H1 (cell line): ENCODE measurements at regions of chr10 and their contacts with region 1.

Region 1: DNA sequence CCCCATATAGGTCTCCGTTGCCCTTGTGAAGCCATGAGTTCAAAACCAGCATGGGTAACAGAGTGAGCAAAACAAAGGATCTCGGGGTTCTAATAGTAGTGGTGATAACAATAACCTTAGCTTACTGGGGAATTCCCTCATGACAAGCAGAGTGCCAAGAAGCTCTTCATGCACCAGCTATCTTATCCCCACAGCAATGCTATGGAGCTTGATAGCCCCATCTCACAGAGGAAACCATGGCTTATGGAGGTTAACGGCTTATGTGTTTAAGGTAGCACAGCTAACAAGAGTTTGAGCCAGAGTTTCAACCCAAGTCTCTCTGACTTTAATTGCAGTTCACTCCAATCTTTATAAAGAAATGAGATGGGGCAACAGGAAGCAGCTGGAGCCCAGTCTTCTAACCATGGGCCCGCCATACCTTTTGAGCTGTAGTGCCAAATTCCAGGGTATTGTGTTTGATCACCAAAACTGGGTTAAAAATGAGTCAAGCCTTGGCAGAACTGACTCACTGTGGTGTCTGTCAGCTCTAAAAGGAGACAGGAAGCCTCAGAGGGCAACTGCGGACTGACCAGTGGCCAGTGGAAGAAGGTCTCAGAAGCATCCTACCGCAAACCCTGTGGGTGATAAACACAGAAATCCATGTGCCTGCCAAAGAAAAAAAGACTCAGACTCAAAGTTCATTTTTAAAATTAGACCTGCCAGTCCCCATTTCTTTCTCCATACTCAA is 16.5 kb upstream of the PLAU start:
- DNase-seq: no peak
- H3K4me3 ChIP-seq: no peak overlapping the region
- H3K27ac ChIP-seq: no peak overlapping the region
- H3K4me1 ChIP-seq: no peaks in the 10 kb centered on the region
- H3K27me3 ChIP-seq: no peaks in the 10 kb centered on the region
- CTCF ChIP-seq: no peak
- EP300 ChIP-seq: no peak
- POLR2A ChIP-seq: no peak
- RAD21 ChIP-seq: no peak

Region 2: GRCh38 chr10:73908853-73909538 is 14.6 kb after region 1 on chr10:
- CTCF ChIA-PET with region 1: interaction called, 103 read pairs
- POLR2A ChIA-PET with region 1: interaction called, 7 read pairs
- DNase-seq: no peak
- H3K4me3 ChIP-seq: no peak overlapping the region
- H3K27ac ChIP-seq: no peak overlapping the region
- H3K4me1 ChIP-seq: peaks cover 15 to 30% (median 24%) of the 10 kb centered on the region in 4 experiments
- H3K27me3 ChIP-seq: peaks cover 3 to 19% (median 12%) of the 10 kb centered on the region in 4 experiments; a peak in 6 of 7 replicates
- CTCF ChIP-seq: no peak
- EP300 ChIP-seq: no peak
- POLR2A ChIP-seq: no peak
- RAD21 ChIP-seq: no peak

Region 3: DNA sequence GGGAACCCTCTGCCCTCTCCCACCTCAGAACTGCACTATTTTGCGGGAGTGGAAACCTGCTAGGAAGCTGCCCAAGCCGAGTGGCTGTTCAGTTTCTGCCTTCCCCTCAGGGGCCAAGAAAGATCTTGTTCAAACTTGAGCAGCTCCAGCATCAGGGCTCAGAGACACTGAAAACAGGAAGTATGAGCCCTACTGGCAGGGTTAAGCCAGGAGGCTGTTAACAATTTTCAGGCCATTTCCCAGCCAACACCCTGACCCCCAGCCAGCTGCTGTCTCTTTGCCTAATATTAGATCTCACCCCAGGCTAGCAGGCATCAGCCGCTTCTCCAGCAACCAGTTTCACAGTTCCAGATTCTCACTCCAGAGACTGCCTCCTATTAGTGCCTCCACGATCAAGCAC is 25.7 kb after region 1 on chr10:
- CTCF ChIA-PET with region 1: interaction called, 14 read pairs
- POLR2A ChIA-PET with region 1: interaction called, 3 read pairs
- DNase-seq: no peak
- H3K4me3 ChIP-seq: no peak overlapping the region
- H3K27ac ChIP-seq: peak overlapping the region; percentile 34; the same call in 1 of the 2 replicates
- H3K4me1 ChIP-seq: peaks cover 3 to 10% (median 4%) of the 10 kb centered on the region in 4 experiments
- H3K27me3 ChIP-seq: no peaks in the 10 kb centered on the region
- CTCF ChIP-seq: no peak
- EP300 ChIP-seq: no peak
- POLR2A ChIP-seq: no peak
- RAD21 ChIP-seq: no peak